ENCODE measurements at regions of chr16 and their contacts with region 1.

Region 1: GRCh38 chr16:22206013-22206841 is at the start of gene EEF2K:
- DNase-seq: peak; percentile 76
- H3K4me3 Mint-ChIP-seq: peak within 1 kb of the TSS; percentile 96
- H3K27ac Mint-ChIP-seq: peak within 1 kb of the TSS; percentile 91
- H3K4me1 Mint-ChIP-seq: peaks cover 41% of the 10 kb centered on the region
- H3K27me3 Mint-ChIP-seq: no peaks in the 10 kb centered on the region
- total RNA-seq, gene EEF2K: 40.4 and 41.0 TPM in 2 replicates

Region 2: GRCh38 chr16:22240023-22240710 is 33.9 kb after region 1 on chr16:
- intact Hi-C with region 1: loop called (anchors 5 kb)
- DNase-seq: no peak
- H3K4me3 Mint-ChIP-seq: no peak overlapping the region
- H3K27ac Mint-ChIP-seq: peak overlapping the region; percentile 90
- H3K4me1 Mint-ChIP-seq: peaks cover 23% of the 10 kb centered on the region
- H3K27me3 Mint-ChIP-seq: no peaks in the 10 kb centered on the region